Thyroid gland (tissue), 4 donors: ENCODE measurements at regions of chr7 and their contacts with region 1.

Region 1: DNA sequence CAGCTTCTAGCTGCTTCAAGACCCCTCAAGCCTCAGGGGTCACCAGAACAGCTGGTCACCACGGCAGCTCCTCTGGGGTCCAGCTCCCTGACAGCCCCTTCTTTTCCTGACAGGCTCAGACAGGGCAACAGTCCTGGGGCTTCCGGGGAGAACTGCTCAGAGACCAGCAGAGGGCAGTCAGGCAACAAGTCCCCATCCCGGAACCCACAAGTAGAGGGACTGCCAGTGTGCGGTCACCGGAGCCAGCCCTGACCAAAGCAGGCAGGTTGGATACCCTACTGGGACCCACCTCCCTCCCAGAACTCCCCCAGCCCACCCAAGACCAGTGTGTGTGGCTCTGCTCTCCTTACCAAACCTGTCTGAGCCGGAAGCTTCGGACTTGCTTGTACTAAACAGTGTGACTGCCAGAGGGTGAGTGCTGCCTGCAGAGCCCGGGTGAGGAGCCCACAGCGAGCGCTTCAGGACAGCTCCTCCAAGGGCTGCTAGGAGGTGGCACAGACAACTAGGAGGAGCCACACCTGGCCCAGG is 40.3 kb downstream of the YKT6 start:
- DNase-seq: peak; percentile 66 to 76
- H3K4me3 ChIP-seq: no peak overlapping the region
- H3K27ac ChIP-seq: no peak overlapping the region
- H3K4me1 ChIP-seq: peaks cover 3 to 6% of the 10 kb centered on the region in 2 donors
- H3K27me3 ChIP-seq: no peaks in the 10 kb centered on the region
- CTCF ChIP-seq: peak in 4 of 6 experiments; percentile 43 to 67 (median 65)
- POLR2A ChIP-seq: no peak

Region 2: DNA sequence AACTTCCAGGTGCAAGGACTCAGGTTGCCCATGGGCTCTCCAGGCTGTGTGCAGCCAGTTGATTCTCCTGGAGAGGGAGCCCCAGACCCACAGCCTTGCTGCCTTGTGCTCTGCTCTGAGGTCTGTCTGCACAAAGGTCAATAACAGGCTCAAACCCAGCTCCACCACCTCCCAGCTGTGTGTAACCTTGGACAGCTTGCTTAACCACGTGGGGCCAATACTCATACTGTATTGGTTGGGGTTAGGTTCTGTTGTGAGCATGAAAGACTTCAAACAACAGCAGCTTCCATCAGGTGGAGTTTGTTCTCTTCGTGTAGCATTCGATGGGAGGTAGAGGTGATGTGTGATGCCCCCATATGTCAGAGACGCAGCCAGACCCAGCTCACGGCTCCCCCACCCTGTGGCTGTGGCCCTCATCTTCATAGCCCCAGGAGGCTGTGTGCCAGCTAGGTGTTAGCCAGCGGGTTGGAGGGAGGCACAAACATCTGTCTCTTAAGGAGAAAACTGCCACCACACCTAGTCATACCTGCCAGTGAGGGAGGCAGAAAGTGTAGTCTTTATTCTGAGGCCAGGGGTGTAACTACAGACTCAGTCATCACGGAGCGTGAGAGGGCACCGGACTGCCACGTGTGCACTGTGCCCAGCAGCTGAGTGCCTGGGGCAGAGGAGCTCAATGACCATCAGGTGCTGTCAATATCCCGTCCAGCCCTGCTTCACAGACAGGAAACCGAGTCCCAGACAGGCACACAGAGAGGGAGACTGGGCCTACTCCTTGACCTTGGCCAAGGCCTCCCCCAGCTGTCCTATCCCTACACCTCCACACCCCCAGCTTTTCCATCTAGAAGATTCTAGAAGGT is 109.6 kb before region 1 on chr7:
- intact Hi-C with region 1: no loop called
- DNase-seq: no peak
- H3K4me3 ChIP-seq: no peak overlapping the region
- H3K27ac ChIP-seq: no peak overlapping the region
- H3K4me1 ChIP-seq: peaks cover 8 to 9% of the 10 kb centered on the region in 2 donors
- H3K27me3 ChIP-seq: no peaks in the 10 kb centered on the region
- CTCF ChIP-seq: no peak
- POLR2A ChIP-seq: no peak

Region 3: GRCh38 chr7:44477980-44478379 is 236.9 kb after region 1 on chr7:
- intact Hi-C with region 1: loop called (anchors 2 kb)
- DNase-seq: no peak
- H3K4me3 ChIP-seq: no peak overlapping the region
- H3K27ac ChIP-seq: no peak overlapping the region
- H3K4me1 ChIP-seq: peaks cover 0 to 7% of the 10 kb centered on the region in 2 donors
- H3K27me3 ChIP-seq: no peaks in the 10 kb centered on the region
- CTCF ChIP-seq: no peak
- POLR2A ChIP-seq: no peak

Region 4: GRCh38 chr7:44565097-44565794 is 324.2 kb after region 1 on chr7:
- intact Hi-C with region 1: loop called (anchors 10 kb)
- DNase-seq: peak; percentile 59 to 64
- H3K4me3 ChIP-seq: no peak overlapping the region
- H3K27ac ChIP-seq: no peak overlapping the region
- H3K4me1 ChIP-seq: no peaks in the 10 kb centered on the region
- H3K27me3 ChIP-seq: no peaks in the 10 kb centered on the region
- CTCF ChIP-seq: peak; percentile 80 to 98 (median 87)
- POLR2A ChIP-seq: no peak